ENCODE measurements at regions of chr17 and their contacts with region 1.

Region 1: DNA sequence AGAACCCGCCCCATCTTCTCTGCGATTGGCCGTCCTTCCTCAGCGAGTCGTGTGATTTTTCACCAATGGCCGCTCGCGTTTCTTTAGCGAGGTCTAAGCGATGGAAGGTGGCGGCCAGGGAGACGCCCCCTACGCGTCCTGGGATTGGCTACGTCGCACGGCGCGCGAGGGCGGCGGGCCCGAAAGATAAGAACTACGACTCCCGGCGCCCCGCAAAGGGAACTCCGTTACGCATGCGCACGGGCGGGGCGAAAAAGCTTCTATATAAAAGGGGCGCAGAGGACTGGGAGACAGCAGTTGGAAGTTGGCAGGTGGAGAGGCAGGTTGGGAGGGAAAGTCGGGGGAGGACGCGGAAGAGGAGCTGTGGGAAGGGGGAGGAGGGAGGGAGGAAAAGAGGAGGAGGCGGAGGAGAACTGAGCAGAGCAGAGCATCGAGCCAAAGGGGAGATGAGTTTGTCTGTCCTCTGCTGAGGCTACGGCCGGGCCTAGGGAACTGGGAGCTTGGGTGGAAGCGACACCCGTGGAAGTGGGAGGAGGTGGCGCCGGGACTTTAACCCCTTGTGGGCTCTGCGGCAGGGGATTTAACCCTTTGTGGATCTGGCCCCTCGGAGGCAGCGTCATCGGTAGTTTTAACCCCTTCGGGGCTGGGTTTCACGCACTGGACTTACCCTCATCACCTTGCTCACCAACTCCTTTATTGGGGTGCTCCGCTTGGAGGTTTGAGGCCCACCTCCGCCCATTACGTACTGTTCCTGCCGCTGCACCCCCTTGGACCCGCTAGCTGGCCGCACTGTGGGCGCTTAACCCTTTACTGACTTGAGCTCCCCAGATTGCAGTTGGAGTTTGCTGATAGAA is at the start of gene HEXIM1:
- DNase-seq: peak; percentile 99
- H3K4me3 Mint-ChIP-seq: peak within 1 kb of the TSS; percentile 99
- H3K27ac Mint-ChIP-seq: peak within 1 kb of the TSS; percentile 99
- H3K4me1 Mint-ChIP-seq: peaks cover 31% of the 10 kb centered on the region
- H3K27me3 Mint-ChIP-seq: no peaks in the 10 kb centered on the region
- total RNA-seq, gene HEXIM1: 46.4 and 48.1 TPM in 2 replicates

Region 2: GRCh38 chr17:45051060-45051719 is 97.2 kb before region 1 on chr17 and contains the start of gene DCAKD:
- intact Hi-C with region 1: loop called (anchors 5 kb)
- DNase-seq: peak; percentile 91
- H3K4me3 Mint-ChIP-seq: peak within 1 kb of the TSS; percentile 87
- H3K27ac Mint-ChIP-seq: peak within 1 kb of the TSS; percentile 91
- H3K4me1 Mint-ChIP-seq: peaks cover 32% of the 10 kb centered on the region
- H3K27me3 Mint-ChIP-seq: no peaks in the 10 kb centered on the region
- total RNA-seq, gene DCAKD: 30.0 and 31.0 TPM in 2 replicates

Region 3: DNA sequence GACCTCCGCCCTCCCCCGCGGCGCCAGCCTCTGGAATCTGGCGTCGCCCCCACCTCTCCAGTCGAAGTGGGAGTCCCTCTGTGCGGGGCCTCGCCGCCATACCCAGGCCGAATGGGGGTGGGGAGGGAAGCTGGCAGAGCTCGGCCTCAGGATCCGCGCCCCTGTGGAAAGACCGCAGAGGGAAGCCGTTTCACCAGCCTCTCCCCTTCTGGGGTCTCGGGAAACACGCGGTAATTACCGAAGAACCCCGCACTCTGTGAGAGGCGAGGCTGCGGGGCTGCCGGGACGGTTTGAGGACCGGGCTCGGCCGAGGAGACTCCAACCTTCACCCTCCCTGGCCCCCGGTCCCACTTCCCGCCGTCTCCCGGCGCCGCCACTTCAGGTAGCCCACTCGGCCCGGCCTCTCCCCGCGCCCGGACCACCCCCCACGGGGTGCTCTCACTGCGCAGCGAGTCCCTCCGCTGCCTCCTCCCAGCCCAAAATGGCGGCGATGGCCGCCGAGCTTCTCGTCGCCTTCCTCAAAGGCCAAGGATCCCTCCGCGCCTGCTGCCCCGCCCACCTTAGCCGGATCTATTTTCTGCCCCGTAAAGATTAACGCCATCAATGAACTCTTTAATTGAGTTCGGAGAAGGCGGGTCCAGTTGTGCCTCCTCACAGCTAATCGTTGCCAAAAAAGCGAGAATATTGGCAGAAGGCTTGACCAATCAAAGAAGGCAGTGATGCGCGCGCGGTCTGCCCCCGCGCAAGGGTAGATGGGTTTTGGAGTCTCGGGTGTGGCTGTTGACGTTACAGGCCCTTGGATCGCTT is 12.8 kb after region 1 on chr17:
- intact Hi-C with region 1: loop called (anchors 1 kb)
- DNase-seq: peak; percentile 99
- H3K4me3 Mint-ChIP-seq: peak overlapping the region; percentile 98
- H3K27ac Mint-ChIP-seq: peak overlapping the region; percentile 98
- H3K4me1 Mint-ChIP-seq: peaks cover 29% of the 10 kb centered on the region
- H3K27me3 Mint-ChIP-seq: no peaks in the 10 kb centered on the region

Region 4: DNA sequence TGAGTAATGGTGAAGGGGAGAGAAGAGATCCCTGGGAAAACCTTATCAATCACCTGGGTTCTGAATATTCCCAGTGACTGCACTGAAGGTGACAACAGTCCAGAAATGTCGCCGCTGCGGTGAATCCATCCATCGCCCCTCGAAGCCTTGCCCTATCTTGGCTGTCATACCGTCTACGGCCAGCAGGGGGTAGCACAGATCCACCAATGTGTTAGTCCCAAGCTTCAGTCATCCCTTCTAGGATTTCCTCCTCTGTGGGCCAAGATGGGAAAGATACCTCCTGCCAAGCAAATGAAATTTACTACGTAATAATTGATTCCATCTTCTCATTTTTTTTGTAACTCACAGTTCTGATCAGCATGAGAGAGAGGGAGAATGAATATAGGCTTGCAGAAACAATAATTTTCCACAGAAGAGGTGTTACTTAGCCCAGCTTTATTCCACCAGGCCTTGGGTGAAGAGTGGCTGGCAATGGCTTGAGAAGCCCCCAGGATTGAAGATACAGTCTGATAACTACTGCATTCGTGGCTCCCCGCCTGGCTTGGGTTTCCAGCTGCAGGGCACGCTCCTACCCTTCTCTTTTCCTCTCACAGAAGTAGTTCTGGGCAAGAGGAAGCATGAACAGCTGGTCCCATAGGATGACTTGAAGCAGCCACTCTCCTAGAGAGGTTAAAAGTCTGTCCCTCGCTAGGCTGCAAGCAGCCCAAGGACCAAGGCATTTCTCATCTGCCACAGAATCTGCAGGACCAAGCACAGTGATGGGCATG is 70.7 kb after region 1 on chr17:
- intact Hi-C with region 1: loop called (anchors 2 kb)
- DNase-seq: peak; percentile 73
- H3K4me3 Mint-ChIP-seq: peak overlapping the region; percentile 85
- H3K27ac Mint-ChIP-seq: peak overlapping the region; percentile 64
- H3K4me1 Mint-ChIP-seq: peaks cover 28% of the 10 kb centered on the region
- H3K27me3 Mint-ChIP-seq: no peaks in the 10 kb centered on the region

Region 5: DNA sequence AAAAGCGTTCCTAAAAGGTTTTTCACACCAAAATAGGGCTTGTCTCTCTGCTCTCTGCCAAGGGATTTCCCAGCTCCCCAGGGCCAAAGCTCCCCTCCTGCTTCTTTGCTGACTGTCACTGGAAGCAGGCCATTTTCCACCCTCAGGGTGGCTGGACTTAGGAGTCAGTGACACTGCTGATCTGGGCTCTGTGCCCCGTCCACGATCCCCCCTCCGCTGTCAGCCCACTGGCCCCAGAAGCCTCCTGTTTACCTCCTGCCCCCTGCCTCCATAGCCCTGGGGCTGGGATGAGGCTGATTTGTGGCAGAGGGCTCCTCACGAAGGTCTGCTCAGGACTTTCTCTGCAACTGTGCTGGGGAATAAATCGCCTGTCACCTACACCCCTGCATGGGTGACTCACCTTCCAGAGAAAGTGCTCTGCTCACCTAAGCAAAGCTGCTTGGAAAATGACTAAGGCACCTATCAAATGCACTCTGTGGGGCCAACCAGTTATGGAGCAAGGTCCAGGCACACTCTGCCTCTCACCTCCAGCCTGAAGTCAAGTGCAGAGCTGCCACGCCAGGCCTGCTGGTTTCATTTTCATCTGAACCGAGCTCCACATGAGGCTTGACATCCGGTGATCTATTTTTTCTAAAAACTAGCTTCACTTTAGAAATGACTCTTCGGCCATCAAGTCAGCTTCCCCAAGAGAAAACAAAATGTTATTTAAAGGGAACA is 163.5 kb after region 1 on chr17:
- intact Hi-C with region 1: loop called (anchors 2 kb)
- DNase-seq: peak; percentile 80
- H3K4me3 Mint-ChIP-seq: peak overlapping the region; percentile 99
- H3K27ac Mint-ChIP-seq: peak overlapping the region; percentile 99
- H3K4me1 Mint-ChIP-seq: peaks cover 68% of the 10 kb centered on the region
- H3K27me3 Mint-ChIP-seq: no peaks in the 10 kb centered on the region

Measured in activated T-helper 2 cell treated with anti-CD3 and anti-CD28 coated beads, Interferon-gamma antibody, Interleukin-2, Interleukin-4, amounts not matched to agents 10 μg/mL and 5 μg/mL and 100 μg/mL, durations not matched to agents 14 hours and 24 hours and 36 hours (primary cell).